ENCODE measurements at regions of chr15 and their contacts with region 1.

Region 1: DNA sequence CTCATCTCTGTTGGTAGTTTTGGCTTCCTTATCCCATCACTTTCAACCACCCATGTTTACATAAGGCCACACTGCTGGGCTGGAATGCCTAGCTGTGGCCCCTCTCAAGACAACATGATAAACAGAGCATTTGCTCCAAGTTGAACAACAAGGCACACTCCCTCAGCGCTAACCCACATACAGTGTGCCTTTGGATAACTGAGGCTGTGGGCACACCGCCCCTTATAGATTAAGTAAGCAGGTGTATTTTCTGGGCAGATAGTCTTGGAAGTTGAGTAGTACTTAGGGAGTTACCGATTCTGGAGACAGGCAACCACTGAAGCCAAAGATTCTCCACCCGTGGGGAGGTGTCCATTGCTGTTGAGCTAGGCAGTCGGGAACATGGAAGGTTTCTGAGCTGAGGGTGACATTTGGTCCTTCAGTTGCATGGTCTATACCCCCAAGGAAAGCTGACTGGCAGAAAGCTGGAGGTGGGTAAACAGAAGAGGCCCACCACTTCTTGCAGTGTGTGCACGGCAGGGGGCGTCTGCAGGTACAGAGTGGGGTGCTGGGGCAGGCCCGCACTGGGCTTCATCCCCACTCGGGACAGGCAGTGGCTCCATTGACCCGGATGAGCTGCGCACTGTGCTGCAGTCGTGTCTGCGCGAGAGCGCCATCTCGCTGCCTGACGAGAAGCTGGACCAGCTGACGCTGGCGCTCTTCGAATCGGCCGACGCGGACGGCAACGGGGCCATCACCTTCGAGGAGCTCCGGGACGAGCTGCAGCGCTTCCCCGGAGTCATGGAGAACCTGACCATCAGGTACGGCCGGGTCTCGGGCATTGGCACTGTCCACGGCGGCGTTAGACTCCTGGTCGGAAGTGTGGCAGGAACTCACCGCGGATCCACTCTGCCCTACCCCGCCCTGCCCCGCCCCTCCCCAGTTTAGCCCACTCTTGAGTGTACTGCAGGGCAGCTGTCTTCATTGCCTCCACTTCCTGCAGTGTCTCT is 16.8 kb downstream of the NOX5 start:
- DNase-seq: no peak
- H3K4me3 ChIP-seq: peak overlapping the region; percentile 30
- H3K27me3 ChIP-seq: no peaks in the 10 kb centered on the region
- CTCF ChIP-seq: peak; percentile 63

Region 2: DNA sequence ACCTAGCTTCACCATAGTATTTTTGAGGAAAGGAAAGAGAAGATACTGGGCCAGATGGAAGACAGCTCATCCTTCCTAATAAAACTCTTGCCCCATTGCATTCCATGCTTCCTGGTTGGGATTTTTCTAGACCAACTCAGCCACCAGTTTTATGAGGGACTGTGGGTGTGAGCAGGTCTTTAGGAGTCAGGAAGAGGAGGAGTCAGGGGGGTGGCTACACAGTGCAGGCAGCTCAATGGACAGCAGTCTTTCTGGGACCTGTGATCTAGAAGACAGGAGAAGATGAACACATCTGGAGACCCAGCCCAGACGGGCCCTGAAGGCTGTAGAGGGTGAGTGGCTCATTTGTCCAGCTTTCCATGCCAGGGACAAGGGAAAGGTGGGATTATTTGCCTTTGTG is 16.9 kb before region 1 on chr15 and contains the start of gene NOX5:
- CTCF ChIA-PET with region 1: interaction called, 14 read pairs
- POLR2A ChIA-PET with region 1: no interaction called
- DNase-seq: peak; percentile 91
- H3K4me3 ChIP-seq: no peak within 1 kb of the TSS
- H3K27me3 ChIP-seq: no peaks in the 10 kb centered on the region
- CTCF ChIP-seq: no peak
- polyA plus RNA-seq, gene NOX5: 0.50 and 0.86 TPM in 2 replicates